ENCODE measurements at regions of chr19 and their contacts with region 1.

Region 1: DNA sequence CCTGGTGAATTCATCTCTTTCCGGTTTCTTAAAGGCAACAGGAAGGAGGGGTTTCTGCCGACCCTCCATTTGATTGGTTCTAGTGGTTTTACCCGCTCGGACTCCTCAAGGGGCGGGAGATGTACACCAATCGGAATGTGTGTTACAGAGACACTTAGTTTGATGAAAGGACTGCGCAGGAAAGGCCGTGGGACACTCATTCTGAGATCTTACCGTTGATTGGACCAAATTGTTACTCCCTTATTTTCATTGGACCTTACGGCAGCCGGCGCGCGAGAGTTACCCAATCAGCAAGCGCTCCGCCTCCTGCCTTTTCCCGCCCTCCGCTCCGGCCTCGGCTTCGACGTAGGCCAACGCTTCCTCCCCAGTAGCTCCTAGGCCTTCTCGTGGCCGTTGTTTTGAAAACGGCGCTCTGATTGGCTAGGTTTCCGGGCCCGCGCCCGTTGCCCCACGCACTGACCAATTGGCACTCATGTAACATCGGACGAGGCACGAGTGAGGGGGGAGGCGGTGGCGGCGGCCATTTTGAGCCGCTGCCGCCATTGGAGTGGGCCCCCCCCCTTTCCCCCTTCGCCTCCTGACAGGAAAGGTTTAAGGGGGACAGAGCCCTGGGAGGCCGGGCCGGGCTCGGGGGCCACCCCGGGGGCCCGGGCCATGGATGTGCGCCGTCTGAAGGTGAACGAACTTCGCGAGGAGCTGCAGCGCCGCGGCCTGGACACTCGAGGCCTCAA is at the start of gene HNRNPUL1:
- DNase-seq: peak; percentile 99
- H3K4me3 Mint-ChIP-seq: peak within 1 kb of the TSS; percentile 91
- H3K27ac Mint-ChIP-seq: peak within 1 kb of the TSS; percentile 99
- H3K4me1 Mint-ChIP-seq: peaks cover 45% of the 10 kb centered on the region
- H3K27me3 Mint-ChIP-seq: no peaks in the 10 kb centered on the region
- total RNA-seq, gene HNRNPUL1: 373 to 398 TPM

Region 2: DNA sequence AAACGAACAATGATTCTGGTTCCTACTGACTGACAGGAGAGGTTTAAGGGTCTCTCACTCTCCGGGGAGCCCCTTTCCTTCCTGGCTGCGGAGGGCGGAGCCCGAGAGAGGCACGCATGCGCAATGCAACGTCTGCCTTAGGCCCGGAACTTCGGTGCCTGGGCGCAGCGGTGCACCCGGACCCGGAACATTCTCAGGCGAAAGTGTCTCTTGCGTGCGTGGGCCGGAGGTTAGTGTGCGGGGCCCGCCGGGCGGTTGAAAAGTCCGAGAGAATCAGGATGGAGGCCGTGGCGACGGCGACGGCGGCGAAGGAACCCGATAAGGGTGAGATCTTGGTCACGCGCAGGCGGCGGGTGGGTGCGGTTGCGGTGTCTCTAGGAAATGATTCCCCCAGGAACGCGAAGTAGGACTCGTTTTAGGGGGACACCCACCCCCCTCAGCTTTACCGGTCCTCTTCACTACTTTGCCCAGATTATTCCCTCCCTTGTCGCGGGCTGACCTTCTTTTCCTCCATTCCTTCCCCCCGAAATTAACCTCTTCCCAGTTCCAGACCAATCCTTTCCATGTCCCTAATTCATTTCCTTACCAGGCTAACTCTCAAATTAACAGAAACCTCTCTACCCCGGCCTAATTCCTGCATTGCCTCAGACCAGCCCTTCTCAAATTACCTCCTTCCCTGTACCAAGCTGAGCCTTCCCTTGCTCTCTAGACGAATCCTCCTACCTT is 46.2 kb after region 1 on chr19 and contains the start of gene CCDC97:
- CTCF ChIA-PET with region 1: interaction called, 114 read pairs
- POLR2A ChIA-PET with region 1: interaction called, 348 read pairs
- DNase-seq: peak; percentile 90
- H3K4me3 Mint-ChIP-seq: peak within 1 kb of the TSS; percentile 98
- H3K27ac Mint-ChIP-seq: peak within 1 kb of the TSS; percentile 98
- H3K4me1 Mint-ChIP-seq: peaks cover 79% of the 10 kb centered on the region
- H3K27me3 Mint-ChIP-seq: no peaks in the 10 kb centered on the region
- total RNA-seq, gene CCDC97: 43.0 to 43.4 TPM

Region 3: DNA sequence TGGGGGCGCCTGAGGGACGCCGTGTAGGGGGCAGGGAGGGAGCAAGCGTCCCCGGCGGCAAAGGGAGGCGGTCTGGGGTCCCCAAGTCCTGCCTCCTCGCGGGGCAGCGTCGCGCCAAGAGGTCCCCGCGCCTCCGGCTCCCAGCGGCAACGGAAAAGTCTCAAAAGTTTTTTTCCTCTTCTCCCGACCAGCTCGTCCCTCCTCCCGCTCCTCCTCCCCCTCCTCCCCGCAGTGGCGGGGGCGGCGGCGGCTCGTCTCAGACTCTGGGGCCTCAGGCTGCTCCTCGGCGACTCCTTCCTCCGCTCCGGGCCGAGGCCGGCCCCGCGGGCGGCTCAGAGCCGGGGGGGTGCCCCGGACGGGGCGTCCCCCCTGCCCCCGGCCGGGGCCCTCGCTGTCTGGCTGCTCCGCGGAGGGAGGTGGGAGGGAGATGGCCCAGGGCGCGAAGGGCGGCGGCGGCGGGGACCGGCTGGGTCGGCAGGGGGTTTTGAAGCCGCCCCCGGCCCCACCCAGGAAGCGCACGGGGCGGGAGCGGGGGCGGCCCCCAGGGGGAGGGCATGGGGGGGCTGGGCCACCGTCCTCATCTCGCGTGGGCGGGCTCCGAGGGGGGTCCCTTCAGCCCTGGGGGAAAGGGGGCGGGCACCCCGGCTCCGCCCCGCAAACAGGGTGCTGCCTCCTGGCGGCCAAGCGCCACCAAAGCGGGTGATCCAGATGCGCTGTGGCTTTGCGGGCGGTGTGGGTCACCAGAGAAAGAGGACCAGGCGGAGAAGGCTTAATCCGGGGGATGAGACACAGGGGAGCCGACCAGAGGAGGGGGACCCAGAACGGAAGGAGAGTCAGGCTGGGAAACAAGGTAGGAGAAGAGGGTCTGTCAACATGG is 89.7 kb after region 1 on chr19 and contains the start of gene TGFB1:
- CTCF ChIA-PET with region 1: interaction called, 20 read pairs
- POLR2A ChIA-PET with region 1: interaction called, 22 read pairs
- DNase-seq: peak; percentile 93
- H3K4me3 Mint-ChIP-seq: peak within 1 kb of the TSS; percentile 97
- H3K27ac Mint-ChIP-seq: peak within 1 kb of the TSS; percentile 90
- H3K4me1 Mint-ChIP-seq: peaks cover 64% of the 10 kb centered on the region
- H3K27me3 Mint-ChIP-seq: no peaks in the 10 kb centered on the region
- total RNA-seq, gene TGFB1: 236 to 247 TPM

Region 4: GRCh38 chr19:41439441-41440222 is 175.6 kb after region 1 on chr19 and contains the start of gene DMAC2:
- CTCF ChIA-PET with region 1: no interaction called
- POLR2A ChIA-PET with region 1: interaction called, 11 read pairs
- DNase-seq: peak; percentile 98
- H3K4me3 Mint-ChIP-seq: no peak within 1 kb of the TSS
- H3K27ac Mint-ChIP-seq: no peak within 1 kb of the TSS
- H3K4me1 Mint-ChIP-seq: peaks cover 14% of the 10 kb centered on the region
- H3K27me3 Mint-ChIP-seq: peaks cover 9% of the 10 kb centered on the region
- total RNA-seq, gene DMAC2: 36.0 to 38.4 TPM

Region 5: DNA sequence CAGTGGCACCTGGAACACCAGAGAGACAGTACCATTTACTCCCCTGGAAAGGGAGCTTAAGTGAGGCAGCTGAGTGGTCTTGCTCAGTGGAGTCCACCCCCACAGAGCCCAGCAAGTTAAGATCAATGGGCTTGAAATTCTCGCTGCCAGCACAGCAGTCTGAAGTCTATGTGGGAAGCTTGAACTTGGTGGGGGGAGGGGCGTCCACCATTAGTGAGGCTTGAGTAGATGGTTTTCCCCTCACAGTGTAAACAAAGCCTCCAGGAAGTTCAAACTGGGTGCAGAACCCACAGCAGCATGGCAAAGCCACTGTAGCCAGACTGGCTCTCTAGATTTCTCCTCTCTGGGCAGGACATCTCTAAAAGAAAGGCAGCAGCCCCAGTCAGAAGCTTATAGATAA is 393.1 kb after region 1 on chr19:
- CTCF ChIA-PET with region 1: no interaction called
- POLR2A ChIA-PET with region 1: no interaction called
- DNase-seq: no peak
- H3K4me3 Mint-ChIP-seq: no peak overlapping the region
- H3K27ac Mint-ChIP-seq: no peak overlapping the region
- H3K4me1 Mint-ChIP-seq: peaks cover 3% of the 10 kb centered on the region
- H3K27me3 Mint-ChIP-seq: peaks cover 55% of the 10 kb centered on the region